AG04450 (cell line): ENCODE measurements at regions of chr3 and their contacts with region 1.

Region 1: GRCh38 chr3:107660306-107660976 is 137.7 kb downstream of the BBX start:
- DNase-seq: no peak
- H3K4me3 ChIP-seq: no peak overlapping the region
- H3K27ac ChIP-seq: no peak overlapping the region
- H3K27me3 ChIP-seq: no peaks in the 10 kb centered on the region
- CTCF ChIP-seq: peak; percentile 66

Region 2: GRCh38 chr3:107414325-107414964 is 246.0 kb before region 1 on chr3:
- CTCF ChIA-PET with region 1: no interaction called
- POLR2A ChIA-PET with region 1: no interaction called
- DNase-seq: no peak
- H3K4me3 ChIP-seq: no peak overlapping the region
- H3K27ac ChIP-seq: no peak overlapping the region
- H3K27me3 ChIP-seq: no peaks in the 10 kb centered on the region
- CTCF ChIP-seq: no peak

Region 3: DNA sequence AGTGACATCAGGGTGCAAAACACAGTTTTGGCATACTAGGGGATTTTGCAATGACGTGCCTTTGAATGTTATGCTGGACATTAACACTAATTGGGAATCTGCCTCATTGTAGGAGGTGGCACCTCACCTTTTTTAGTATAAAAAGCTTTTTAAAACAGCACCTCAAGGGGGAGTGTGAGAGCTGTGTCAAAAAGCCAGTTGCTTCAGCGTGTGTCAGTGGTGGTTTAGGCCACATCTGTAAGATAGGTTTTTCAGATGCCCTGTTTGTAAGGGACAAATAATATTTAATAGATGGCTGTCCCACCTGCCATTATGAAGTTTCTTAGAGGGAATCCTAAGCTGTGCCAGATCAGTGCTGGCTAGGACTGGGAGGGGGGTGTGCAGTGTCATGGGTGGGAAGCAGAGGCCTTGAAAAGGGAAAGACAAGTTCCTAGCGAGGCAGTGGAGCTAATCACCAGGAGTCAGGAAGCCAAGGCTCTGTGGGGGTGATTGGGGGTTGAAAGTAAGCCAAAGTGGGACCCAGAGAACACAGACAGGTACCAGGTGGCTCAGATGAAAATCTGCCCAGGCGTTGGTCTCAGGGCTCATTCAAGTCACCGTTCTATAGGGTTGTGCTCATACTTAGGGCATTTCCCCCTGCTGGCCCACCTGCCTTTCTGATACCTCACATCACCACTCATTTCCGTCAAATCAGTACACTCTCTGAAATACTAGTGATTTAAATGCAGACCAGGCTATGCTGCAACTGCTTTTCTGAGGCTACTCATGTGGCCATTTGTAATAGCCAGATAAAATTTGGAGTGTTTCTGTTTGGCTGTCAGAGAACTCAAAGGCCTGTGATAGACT is 17.2 kb before region 1 on chr3:
- CTCF ChIA-PET with region 1: interaction called, 10 read pairs
- POLR2A ChIA-PET with region 1: no interaction called
- DNase-seq: no peak
- H3K4me3 ChIP-seq: no peak overlapping the region
- H3K27ac ChIP-seq: no peak overlapping the region
- H3K27me3 ChIP-seq: no peaks in the 10 kb centered on the region
- CTCF ChIP-seq: peak; percentile 36

Region 4: DNA sequence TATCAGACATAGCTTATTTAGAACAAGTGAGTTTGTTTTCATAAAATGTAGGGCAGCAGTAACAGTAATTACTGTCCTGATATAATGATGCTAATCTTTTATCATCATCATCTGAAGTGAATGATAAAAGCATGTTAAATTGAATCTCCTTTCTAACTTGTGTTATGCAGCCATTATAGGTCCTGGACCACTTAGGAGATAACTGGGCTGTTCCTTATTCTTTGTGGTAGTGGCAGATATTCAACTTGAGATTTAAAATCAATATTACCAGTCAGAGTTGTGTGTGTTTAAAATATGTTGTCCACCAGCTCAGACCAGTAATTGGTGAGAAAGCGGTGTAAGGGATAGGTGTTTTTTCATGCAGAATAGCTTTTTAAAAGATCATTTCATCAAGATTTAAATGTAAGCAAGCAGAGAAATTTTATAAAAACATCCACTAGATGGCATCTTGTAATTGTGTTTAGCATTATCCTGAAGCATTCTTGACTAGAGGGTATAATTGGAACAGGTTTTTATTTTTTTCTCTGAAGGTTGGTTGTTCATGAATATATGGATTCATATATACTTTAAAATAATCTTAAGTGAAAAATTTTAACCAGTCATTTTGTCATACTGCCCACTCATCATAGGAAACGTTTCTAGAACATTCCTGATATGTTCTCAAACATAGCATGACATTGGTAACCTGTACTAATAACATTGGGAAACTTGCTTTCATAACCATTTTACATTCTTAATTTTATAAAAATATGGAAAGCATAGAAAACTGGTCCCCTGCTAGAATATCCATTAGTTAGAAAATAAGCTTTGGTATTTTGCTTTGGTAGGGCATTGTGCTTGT is 16.2 kb after region 1 on chr3:
- CTCF ChIA-PET with region 1: interaction called, 149 read pairs
- POLR2A ChIA-PET with region 1: interaction called, 3 read pairs
- DNase-seq: no peak
- H3K4me3 ChIP-seq: no peak overlapping the region
- H3K27ac ChIP-seq: no peak overlapping the region
- H3K27me3 ChIP-seq: no peaks in the 10 kb centered on the region
- CTCF ChIP-seq: peak; percentile 56

Region 5: DNA sequence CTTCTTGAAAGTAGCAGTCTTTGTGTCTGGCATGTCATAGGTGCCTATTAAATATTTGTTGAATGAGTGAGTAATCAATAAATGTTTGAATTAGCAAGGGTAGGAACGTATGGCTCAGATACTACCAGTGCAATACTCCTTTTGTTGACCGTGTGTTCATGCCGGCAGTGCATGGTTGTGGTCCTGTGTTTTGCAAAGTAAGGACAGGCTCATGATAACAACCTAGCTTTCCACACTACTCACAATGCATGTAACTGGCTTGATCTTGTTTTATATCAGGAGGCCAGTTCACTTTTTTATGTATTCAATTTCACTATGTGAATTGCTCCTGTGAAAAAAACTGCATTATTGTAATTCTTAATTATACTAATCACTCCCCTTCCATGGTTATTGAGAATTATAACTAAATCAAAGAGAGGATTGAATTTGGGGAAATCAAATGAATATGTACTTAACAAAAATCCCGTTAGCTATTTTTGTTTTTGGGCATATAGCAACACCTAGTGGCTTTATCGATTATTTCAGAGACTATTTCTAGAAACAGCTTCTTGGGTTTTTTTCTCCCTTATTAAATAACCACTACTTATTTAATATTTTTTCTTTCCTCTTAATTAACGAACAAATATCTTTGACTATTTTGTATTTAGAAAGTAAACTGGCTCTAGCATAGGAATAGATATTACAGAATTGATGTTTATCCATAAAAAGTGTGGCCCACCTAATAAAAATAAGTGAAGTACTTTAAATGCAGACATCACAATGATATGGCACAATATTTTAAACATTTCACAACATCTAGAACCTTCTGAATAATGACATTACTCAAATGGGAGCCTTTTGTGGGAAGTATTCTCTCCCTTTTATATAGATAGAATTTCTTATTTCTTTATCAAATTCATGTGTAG is 80.8 kb after region 1 on chr3:
- CTCF ChIA-PET with region 1: interaction called, 49 read pairs
- POLR2A ChIA-PET with region 1: no interaction called
- DNase-seq: no peak
- H3K4me3 ChIP-seq: no peak overlapping the region
- H3K27ac ChIP-seq: no peak overlapping the region
- H3K27me3 ChIP-seq: no peaks in the 10 kb centered on the region
- CTCF ChIP-seq: peak; percentile 62

Region 6: DNA sequence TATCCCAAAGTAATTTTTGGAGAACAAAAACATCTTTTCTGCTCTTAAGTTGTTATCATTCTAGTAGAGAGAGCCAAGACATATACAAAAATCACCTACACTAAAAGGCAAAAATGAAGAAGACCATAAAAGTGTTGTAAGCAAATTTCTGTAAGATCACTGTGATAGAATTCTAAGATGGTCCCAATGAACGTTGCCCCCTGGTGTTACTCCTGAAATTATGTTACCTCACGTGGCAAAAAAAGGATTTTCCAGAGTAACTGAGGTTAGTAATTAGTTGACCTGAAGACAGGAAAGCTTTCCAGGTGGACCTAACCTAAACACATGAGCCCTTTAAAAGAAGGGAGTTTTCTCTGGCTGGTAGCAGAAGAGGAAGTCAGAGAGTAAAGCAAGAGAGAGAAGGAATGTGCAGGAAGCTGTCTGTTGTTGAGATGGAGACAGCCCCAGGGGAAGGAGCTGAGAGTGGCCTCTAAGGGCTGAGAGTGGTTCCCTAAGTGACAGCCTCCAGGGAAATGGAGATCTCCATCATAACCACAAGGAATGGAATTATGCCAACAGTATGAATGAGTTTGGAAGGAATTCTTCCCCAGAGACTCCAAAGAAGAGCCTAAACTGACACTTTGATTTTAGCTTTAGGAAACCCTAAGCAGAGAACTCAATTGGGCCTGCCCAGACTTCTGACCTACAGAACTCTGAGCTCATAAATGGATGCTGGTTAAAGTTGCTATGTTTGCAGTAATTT is 224.4 kb after region 1 on chr3:
- CTCF ChIA-PET with region 1: interaction called, 10 read pairs
- POLR2A ChIA-PET with region 1: no interaction called
- DNase-seq: peak; percentile 10
- H3K4me3 ChIP-seq: no peak overlapping the region
- H3K27ac ChIP-seq: no peak overlapping the region
- H3K27me3 ChIP-seq: no peaks in the 10 kb centered on the region
- CTCF ChIP-seq: peak; percentile 46